Activated CD8-positive, alpha-beta T cell treated with anti-CD3 and anti-CD28 coated beads for 36 hours (primary cell): ENCODE measurements at regions of chr5 and their contacts with region 1.

Region 1: GRCh38 chr5:177403792-177404640 is 3.6 kb upstream of the PFN3 start:
- DNase-seq: peak; percentile 89
- ATAC-seq: peak; percentile 87
- H3K4me3 Mint-ChIP-seq: peak overlapping the region; percentile 73
- H3K27ac Mint-ChIP-seq: peak overlapping the region; percentile 47
- H3K4me1 Mint-ChIP-seq: peaks cover 26% of the 10 kb centered on the region
- H3K27me3 Mint-ChIP-seq: peaks cover 23% of the 10 kb centered on the region
- CTCF ChIP-seq: peak; percentile 83

Region 2: GRCh38 chr5:177311723-177312648 is 92.0 kb before region 1 on chr5 and contains the start of gene MXD3:
- CTCF ChIA-PET with region 1: interaction called, 58 read pairs
- POLR2A ChIA-PET with region 1: interaction called, 5 read pairs
- intact Hi-C with region 1: loop called (anchors 10 kb)
- DNase-seq: peak; percentile 100
- ATAC-seq: peak; percentile 87
- H3K4me3 Mint-ChIP-seq: peak within 1 kb of the TSS; percentile 89
- H3K27ac Mint-ChIP-seq: peak within 1 kb of the TSS; percentile 91
- H3K4me1 Mint-ChIP-seq: peaks cover 26% of the 10 kb centered on the region
- H3K27me3 Mint-ChIP-seq: no peaks in the 10 kb centered on the region
- CTCF ChIP-seq: no peak
- total RNA-seq, gene MXD3: 19.3 to 25.1 TPM

Region 3: GRCh38 chr5:177362610-177363507 is 41.2 kb before region 1 on chr5:
- CTCF ChIA-PET with region 1: interaction called, 10 read pairs
- POLR2A ChIA-PET with region 1: no interaction called
- intact Hi-C with region 1: no loop called
- DNase-seq: peak; percentile 80
- ATAC-seq: peak; percentile 72
- H3K4me3 Mint-ChIP-seq: peak overlapping the region; percentile 73
- H3K27ac Mint-ChIP-seq: peak overlapping the region; percentile 77
- H3K4me1 Mint-ChIP-seq: peaks cover 71% of the 10 kb centered on the region
- H3K27me3 Mint-ChIP-seq: no peaks in the 10 kb centered on the region
- CTCF ChIP-seq: no peak

Region 4: GRCh38 chr5:177390363-177391300 is 13.4 kb before region 1 on chr5:
- CTCF ChIA-PET with region 1: interaction called, 167 read pairs
- POLR2A ChIA-PET with region 1: interaction called, 26 read pairs
- intact Hi-C with region 1: no loop called
- DNase-seq: peak; percentile 96
- ATAC-seq: peak; percentile 81
- H3K4me3 Mint-ChIP-seq: peak overlapping the region; percentile 13
- H3K27ac Mint-ChIP-seq: peak overlapping the region; percentile 76
- H3K4me1 Mint-ChIP-seq: peaks cover 36% of the 10 kb centered on the region
- H3K27me3 Mint-ChIP-seq: no peaks in the 10 kb centered on the region
- CTCF ChIP-seq: peak; percentile 93

Region 5: GRCh38 chr5:177440211-177440971 is 36.4 kb after region 1 on chr5:
- CTCF ChIA-PET with region 1: interaction called, 415 read pairs
- POLR2A ChIA-PET with region 1: interaction called, 140 read pairs
- intact Hi-C with region 1: no loop called
- DNase-seq: peak; percentile 71
- ATAC-seq: peak; percentile 72
- H3K4me3 Mint-ChIP-seq: peak overlapping the region; percentile 10
- H3K27ac Mint-ChIP-seq: peak overlapping the region; percentile 87
- H3K4me1 Mint-ChIP-seq: peaks cover 57% of the 10 kb centered on the region
- H3K27me3 Mint-ChIP-seq: no peaks in the 10 kb centered on the region
- CTCF ChIP-seq: no peak

Region 6: DNA sequence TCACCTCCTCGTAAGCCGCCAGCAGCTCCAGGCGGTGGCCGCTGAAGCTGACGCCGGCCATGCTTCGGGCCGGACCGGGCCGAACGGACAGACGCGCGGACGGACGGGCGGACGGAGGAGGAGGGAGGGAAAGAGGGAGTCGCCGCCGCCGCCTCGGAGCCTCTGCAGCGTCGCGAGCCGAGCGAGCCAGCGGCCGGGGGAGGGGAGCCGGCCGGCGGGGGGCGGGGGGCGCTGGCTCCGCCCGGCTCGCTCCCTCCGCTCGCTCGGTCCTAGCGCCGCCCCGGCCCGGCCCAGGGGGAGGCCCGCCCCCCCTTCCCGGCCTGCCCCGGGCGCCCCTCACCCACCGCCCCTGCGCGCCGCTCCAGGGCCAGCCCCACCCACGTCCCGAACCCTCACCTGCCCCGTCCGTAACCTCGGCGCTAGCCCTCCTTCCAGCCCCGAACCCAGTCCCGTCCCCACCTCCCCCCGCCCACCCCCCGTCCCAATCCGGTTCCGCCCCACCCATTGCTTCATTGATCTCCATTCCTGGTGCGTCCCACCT is 69.5 kb after region 1 on chr5 and contains the start of gene DBN1:
- CTCF ChIA-PET with region 1: interaction called, 29 read pairs
- POLR2A ChIA-PET with region 1: interaction called, 4 read pairs
- intact Hi-C with region 1: no loop called
- DNase-seq: peak; percentile 54
- ATAC-seq: peak; percentile 35
- H3K4me3 Mint-ChIP-seq: peak within 1 kb of the TSS; percentile 80
- H3K27ac Mint-ChIP-seq: peak within 1 kb of the TSS; percentile 82
- H3K4me1 Mint-ChIP-seq: peaks cover 60% of the 10 kb centered on the region
- H3K27me3 Mint-ChIP-seq: no peaks in the 10 kb centered on the region
- CTCF ChIP-seq: no peak
- total RNA-seq, gene DBN1: 101 to 105 TPM